ENCODE measurements at regions of chr20 and their contacts with region 1.

Region 1: GRCh38 chr20:5714261-5715041 is 35.8 kb upstream of the SHLD1 start:
- DNase-seq: peak; percentile 53
- H3K4me3 Mint-ChIP-seq: no peak overlapping the region
- H3K27ac Mint-ChIP-seq: peak overlapping the region; percentile 75
- H3K4me1 Mint-ChIP-seq: peaks cover 16% of the 10 kb centered on the region
- H3K27me3 Mint-ChIP-seq: peaks cover 2% of the 10 kb centered on the region

Region 2: DNA sequence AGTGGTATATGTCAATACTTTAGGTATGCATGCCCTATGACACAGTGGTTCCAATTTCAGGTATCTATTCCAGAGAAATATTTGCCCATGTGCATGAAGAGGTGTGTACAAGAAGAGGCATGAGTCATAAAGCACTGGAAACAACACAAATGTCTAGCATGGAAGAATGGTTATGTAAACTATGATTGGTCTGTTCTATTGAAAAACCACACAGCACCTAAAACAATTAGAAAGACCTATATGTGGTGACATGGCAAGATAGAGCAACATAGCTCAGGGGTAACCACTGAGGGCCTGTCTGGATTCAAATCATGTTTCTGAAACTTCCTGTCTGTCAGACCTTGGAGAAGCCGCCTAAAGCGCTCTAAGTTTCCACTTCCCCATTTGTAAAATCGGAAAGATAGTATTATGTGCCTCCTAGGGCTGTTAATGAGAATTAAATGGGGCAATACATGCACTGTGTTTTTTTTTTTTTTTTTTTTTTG is 40.2 kb before region 1 on chr20:
- intact Hi-C with region 1: loop called (anchors 1 kb)
- DNase-seq: no peak
- H3K4me3 Mint-ChIP-seq: no peak overlapping the region
- H3K27ac Mint-ChIP-seq: peak overlapping the region; percentile 5
- H3K4me1 Mint-ChIP-seq: peaks cover 7% of the 10 kb centered on the region
- H3K27me3 Mint-ChIP-seq: peaks cover under 1% of the 10 kb centered on the region

Region 3: GRCh38 chr20:5749952-5750779 is 35.7 kb after region 1 on chr20 and contains the start of gene SHLD1:
- intact Hi-C with region 1: loop called (anchors 1 kb)
- DNase-seq: peak; percentile 69
- H3K4me3 Mint-ChIP-seq: peak within 1 kb of the TSS; percentile 87
- H3K27ac Mint-ChIP-seq: peak within 1 kb of the TSS; percentile 87
- H3K4me1 Mint-ChIP-seq: peaks cover 23% of the 10 kb centered on the region
- H3K27me3 Mint-ChIP-seq: peaks cover 8% of the 10 kb centered on the region
- total RNA-seq, gene SHLD1: 8.1 and 10.8 TPM in 2 replicates